ENCODE measurements at regions of chr10 and their contacts with region 1.

Region 1: DNA sequence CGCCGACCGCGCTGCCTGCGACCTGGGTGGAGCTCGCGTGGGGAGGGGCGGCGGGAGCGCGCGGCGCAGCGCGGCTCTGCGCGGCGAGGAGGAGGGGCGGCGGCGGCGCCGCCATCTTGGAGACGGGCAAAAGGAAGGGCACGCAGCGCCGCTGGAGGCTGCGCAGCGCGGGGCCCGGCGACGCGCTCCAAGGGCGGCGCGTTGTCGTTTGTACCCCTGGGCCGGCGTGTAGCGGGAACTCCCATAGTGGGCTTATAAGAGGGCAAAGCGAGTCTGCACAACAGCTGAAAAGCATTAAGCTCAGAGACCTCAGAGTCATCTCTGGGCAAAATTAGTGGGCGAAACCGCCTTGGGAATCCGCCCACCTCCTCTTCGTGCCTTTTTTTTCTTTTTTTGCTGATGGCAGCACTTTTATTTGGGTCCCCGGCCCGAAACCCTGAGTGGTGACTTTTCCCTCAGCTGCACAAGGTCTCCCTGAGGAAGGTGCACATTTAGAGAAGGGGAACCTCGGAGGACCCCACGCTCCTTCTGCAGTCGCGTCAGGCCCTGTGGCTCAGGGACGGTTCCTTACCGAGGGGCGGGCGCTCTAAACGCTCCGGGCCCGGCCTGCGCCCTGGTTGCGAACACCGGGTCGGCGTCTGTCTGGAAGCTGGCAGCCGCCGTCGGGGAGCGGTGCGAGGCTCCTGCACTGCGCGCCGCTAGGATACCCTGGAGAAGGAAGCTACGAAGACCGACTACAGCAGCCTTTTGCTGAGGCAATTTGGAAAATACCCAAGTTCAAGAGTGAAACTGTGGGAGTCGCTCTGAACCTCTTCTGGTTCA is 428 bp upstream of the MCMBP start:
- H3K4me3 Mint-ChIP-seq: peak overlapping the region; percentile 85
- H3K27ac Mint-ChIP-seq: peak overlapping the region; percentile 94
- H3K4me1 Mint-ChIP-seq: peaks cover 27% of the 10 kb centered on the region
- H3K27me3 Mint-ChIP-seq: no peaks in the 10 kb centered on the region

Region 2: GRCh38 chr10:119817991-119818888 is 54.8 kb before region 1 on chr10:
- intact Hi-C with region 1: no loop called
- H3K4me3 Mint-ChIP-seq: peak overlapping the region; percentile 27
- H3K27ac Mint-ChIP-seq: no peak overlapping the region
- H3K4me1 Mint-ChIP-seq: no peaks in the 10 kb centered on the region
- H3K27me3 Mint-ChIP-seq: peaks cover 3% of the 10 kb centered on the region

Region 3: DNA sequence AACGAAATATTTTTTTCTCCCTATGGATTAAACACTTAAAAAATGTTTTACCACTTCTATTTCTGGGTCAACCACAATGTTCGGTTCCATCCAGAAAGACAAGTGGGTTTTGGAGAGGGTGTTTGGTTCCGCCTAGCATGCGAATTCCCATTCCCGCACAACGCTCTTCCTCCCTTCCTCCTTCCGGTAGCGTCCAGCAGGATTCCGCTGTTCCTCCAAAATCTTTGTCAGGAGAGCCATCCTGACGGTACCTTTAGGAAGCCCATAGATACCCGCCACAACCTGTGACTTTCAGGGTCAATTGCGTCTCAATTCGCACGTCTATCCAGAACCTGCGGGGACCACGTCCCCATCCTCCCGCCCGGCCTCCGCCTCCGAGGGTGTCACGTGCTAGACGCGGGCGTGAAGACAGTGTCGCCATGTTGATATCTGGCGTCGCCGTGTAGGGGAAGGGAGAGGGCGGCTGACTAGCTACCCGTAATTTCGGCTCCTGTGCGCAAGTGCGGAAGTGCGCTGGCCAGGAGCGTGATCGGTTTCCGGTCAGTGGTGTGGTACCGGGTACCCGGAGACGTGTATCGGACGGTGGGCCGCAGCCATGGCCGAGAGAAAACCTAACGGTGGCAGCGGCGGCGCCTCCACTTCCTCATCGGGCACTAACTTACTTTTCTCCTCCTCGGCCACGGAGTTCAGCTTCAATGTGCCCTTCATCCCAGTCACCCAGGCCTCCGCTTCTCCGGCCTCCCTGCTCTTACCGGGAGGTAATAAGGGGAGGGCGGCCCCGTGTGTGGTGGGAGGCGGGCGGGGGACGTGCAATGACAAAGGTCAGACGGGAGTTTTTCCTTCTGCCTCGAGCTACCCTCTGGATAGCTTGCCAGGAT is 19.4 kb after region 1 on chr10 and contains the start of gene SEC23IP:
- intact Hi-C with region 1: loop called (anchors 1 kb)
- H3K4me3 Mint-ChIP-seq: peak within 1 kb of the TSS; percentile 98
- H3K27ac Mint-ChIP-seq: peak within 1 kb of the TSS; percentile 91
- H3K4me1 Mint-ChIP-seq: peaks cover 66% of the 10 kb centered on the region
- H3K27me3 Mint-ChIP-seq: no peaks in the 10 kb centered on the region